Natural killer cell (primary cell): ENCODE measurements at regions of chr20 and their contacts with region 1.

Region 1: GRCh38 chr20:49915378-49916145 is at the start of gene SPATA2:
- DNase-seq: peak; percentile 95 to 98
- ATAC-seq: peak; percentile 69 to 86 (median 77)
- H3K4me3 ChIP-seq: peak within 1 kb of the TSS; percentile 82
- H3K4me3 Mint-ChIP-seq: peak within 1 kb of the TSS; percentile 98
- H3K27ac ChIP-seq: peak within 1 kb of the TSS; percentile 96
- H3K27ac Mint-ChIP-seq: peak within 1 kb of the TSS; percentile 100
- H3K4me1 ChIP-seq: peaks cover 26% of the 10 kb centered on the region
- H3K4me1 Mint-ChIP-seq: peaks cover 41 to 46% of the 10 kb centered on the region in 2 donors
- H3K27me3 ChIP-seq: no peaks in the 10 kb centered on the region
- H3K27me3 Mint-ChIP-seq: no peaks in the 10 kb centered on the region
- CTCF ChIP-seq: no peak
- total RNA-seq, gene SPATA2: 16.4 to 25.8 (median 25.1) TPM

Region 2: GRCh38 chr20:49610701-49611538 is 304.6 kb before region 1 on chr20:
- intact Hi-C with region 1: no loop called
- DNase-seq: peak; percentile 79 to 80
- ATAC-seq: peak; percentile 84 to 90 (median 86)
- H3K4me3 ChIP-seq: no peak overlapping the region
- H3K4me3 Mint-ChIP-seq: peak overlapping the region; percentile 68
- H3K27ac ChIP-seq: no peak overlapping the region
- H3K27ac Mint-ChIP-seq: peak overlapping the region in 1 of 2 donors; percentile 37
- H3K4me1 ChIP-seq: peaks cover 20% of the 10 kb centered on the region
- H3K4me1 Mint-ChIP-seq: peaks cover 12 to 20% of the 10 kb centered on the region in 2 donors
- H3K27me3 ChIP-seq: no peaks in the 10 kb centered on the region
- H3K27me3 Mint-ChIP-seq: peaks cover 6% of the 10 kb centered on the region in 2 donors
- CTCF ChIP-seq: peak; percentile 100

Region 3: GRCh38 chr20:49936153-49937027 is 20.8 kb after region 1 on chr20 and contains the start of gene RNF114:
- intact Hi-C with region 1: loop called (anchors 1 kb)
- DNase-seq: peak; percentile 86 to 96
- ATAC-seq: peak; percentile 94 to 97 (median 97)
- H3K4me3 ChIP-seq: peak within 1 kb of the TSS; percentile 99
- H3K4me3 Mint-ChIP-seq: peak within 1 kb of the TSS; percentile 95
- H3K27ac ChIP-seq: peak within 1 kb of the TSS; percentile 92
- H3K27ac Mint-ChIP-seq: peak within 1 kb of the TSS; percentile 88 to 90
- H3K4me1 ChIP-seq: peaks cover 36% of the 10 kb centered on the region
- H3K4me1 Mint-ChIP-seq: peaks cover 43 to 45% of the 10 kb centered on the region in 2 donors
- H3K27me3 ChIP-seq: no peaks in the 10 kb centered on the region
- H3K27me3 Mint-ChIP-seq: no peaks in the 10 kb centered on the region
- CTCF ChIP-seq: no peak
- total RNA-seq, gene RNF114: 92.3 to 108 (median 100) TPM

Region 4: GRCh38 chr20:50020288-50020687 is 104.7 kb after region 1 on chr20:
- intact Hi-C with region 1: no loop called
- DNase-seq: no peak
- ATAC-seq: peak in 1 of 3 donors; percentile 44
- H3K4me3 ChIP-seq: no peak overlapping the region
- H3K4me3 Mint-ChIP-seq: no peak overlapping the region
- H3K27ac ChIP-seq: no peak overlapping the region
- H3K27ac Mint-ChIP-seq: no peak overlapping the region
- H3K4me1 ChIP-seq: peaks cover 8% of the 10 kb centered on the region
- H3K4me1 Mint-ChIP-seq: peaks cover 0 to 12% of the 10 kb centered on the region in 2 donors
- H3K27me3 ChIP-seq: no peaks in the 10 kb centered on the region
- H3K27me3 Mint-ChIP-seq: peaks cover 6 to 7% of the 10 kb centered on the region in 2 donors
- CTCF ChIP-seq: no peak